AG04449 (cell line): ENCODE measurements at regions of chr19 and their contacts with region 1.

Region 1: GRCh38 chr19:44988896-44989556 is 12.2 kb upstream of the RELB start:
- DNase-seq: no peak
- H3K4me3 ChIP-seq: no peak overlapping the region
- CTCF ChIP-seq: peak; percentile 85

Region 2: GRCh38 chr19:44808463-44809371 is 180.3 kb before region 1 on chr19 and contains the start of gene BCAM:
- CTCF ChIA-PET with region 1: no interaction called
- POLR2A ChIA-PET with region 1: no interaction called
- DNase-seq: no peak
- H3K4me3 ChIP-seq: peak within 1 kb of the TSS; percentile 64
- CTCF ChIP-seq: no peak

Region 3: DNA sequence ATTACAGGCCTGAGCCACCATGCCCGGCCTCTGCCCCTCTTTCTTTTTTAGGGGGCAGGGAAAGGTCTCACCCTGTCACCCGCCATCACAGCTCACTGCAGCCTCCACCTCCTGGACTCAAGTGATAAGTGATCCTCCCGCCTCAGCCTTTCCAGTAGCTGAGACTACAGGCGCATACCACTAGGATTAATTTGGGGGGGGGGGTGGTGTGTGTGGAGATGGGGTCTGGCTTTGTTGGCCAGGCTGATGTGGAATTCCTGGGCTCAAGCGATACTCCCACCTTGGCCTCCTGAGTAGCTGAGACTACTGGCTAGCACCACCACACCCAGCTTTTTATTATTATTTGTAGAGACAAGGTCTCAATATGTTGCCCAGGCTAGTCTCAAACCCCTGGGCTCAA is 79.3 kb before region 1 on chr19:
- CTCF ChIA-PET with region 1: no interaction called
- POLR2A ChIA-PET with region 1: no interaction called
- DNase-seq: no peak
- H3K4me3 ChIP-seq: no peak overlapping the region
- CTCF ChIP-seq: no peak

Region 4: DNA sequence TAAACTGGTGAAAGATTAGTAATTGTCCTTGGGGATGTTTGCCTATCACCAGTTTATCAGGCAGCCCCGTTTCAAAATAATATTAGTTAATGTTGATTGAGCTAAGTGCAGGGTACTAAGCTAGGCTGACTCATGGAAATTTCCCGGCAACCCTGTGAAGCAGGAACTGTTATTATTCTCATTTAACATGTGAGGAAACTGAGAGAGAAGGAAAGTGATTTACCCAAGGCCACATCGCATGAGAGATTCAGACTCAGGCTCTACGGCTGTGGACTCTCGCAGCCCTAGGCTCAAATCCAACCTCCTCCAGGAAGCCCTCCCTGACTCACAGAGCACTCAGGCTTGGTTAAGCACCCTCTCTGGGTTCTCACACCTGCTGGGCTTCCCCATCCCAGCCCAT is 14.2 kb before region 1 on chr19:
- CTCF ChIA-PET with region 1: interaction called, 22 read pairs
- POLR2A ChIA-PET with region 1: no interaction called
- DNase-seq: no peak
- H3K4me3 ChIP-seq: no peak overlapping the region
- CTCF ChIP-seq: no peak

Region 5: DNA sequence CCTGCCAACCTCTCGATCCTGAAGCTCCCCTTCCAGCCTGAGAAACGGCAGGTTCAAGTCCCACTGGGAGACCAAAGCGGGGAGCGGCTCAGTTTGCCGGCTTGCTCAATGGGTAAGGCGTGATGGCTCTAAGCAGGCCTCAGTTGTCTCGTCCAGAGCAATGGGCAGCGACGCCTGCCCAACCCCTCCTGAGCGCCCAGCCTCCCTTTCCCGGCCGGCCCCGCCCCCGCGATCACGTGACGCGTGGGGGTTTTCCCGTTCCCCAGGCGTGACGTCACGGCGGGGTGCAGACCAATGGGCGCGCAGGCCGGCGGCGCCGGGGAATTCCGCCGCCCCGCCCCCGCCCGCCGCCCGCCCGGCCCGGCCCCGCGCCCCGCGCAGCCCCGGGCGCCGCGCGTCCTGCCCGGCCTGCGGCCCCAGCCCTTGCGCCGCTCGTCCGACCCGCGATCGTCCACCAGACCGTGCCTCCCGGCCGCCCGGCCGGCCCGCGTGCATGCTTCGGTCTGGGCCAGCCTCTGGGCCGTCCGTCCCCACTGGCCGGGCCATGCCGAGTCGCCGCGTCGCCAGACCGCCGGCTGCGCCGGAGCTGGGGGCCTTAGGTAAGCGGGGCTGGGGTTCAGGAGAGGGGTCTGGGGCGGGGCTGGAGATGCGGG is 12.2 kb after region 1 on chr19 and contains the start of gene RELB:
- CTCF ChIA-PET with region 1: interaction called, 24 read pairs
- POLR2A ChIA-PET with region 1: interaction called, 4 read pairs
- DNase-seq: peak; percentile 34
- H3K4me3 ChIP-seq: peak within 1 kb of the TSS; percentile 76
- CTCF ChIP-seq: no peak

Region 6: GRCh38 chr19:45038931-45039893 is 50.2 kb after region 1 on chr19 and contains the start of gene CLASRP:
- CTCF ChIA-PET with region 1: no interaction called
- POLR2A ChIA-PET with region 1: no interaction called
- DNase-seq: peak; percentile 36
- H3K4me3 ChIP-seq: peak within 1 kb of the TSS; percentile 99
- CTCF ChIP-seq: no peak

Region 7: GRCh38 chr19:45238556-45238955 is 249.5 kb after region 1 on chr19:
- CTCF ChIA-PET with region 1: no interaction called
- POLR2A ChIA-PET with region 1: no interaction called
- DNase-seq: no peak
- H3K4me3 ChIP-seq: no peak overlapping the region
- CTCF ChIP-seq: no peak